Right ventricle myocardium inferior (tissue), 1 donor: ENCODE measurements at regions of chr17 and their contacts with region 1.

Region 1: DNA sequence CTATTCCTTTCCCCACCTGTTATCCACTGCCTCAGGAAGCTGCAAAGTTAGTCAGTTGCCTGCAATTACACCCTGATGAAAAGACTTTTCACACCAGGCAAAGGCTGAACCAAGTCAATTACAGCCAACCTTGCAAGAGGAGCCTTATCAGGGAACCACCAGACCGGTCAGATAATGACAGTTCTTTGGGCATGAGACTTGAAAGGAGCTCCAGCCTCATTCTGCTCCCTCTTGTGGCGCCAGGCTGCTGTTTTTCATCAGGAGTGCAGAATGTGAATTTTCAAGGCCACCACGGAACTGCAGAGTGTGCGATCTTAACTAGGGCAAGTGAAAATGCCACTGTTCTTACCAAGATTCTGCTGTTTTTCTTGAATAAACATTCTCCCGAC is 22.5 kb downstream of the DNAI2 start:
- DNase-seq: peak; percentile 64
- ATAC-seq: peak; percentile 86

Region 2: DNA sequence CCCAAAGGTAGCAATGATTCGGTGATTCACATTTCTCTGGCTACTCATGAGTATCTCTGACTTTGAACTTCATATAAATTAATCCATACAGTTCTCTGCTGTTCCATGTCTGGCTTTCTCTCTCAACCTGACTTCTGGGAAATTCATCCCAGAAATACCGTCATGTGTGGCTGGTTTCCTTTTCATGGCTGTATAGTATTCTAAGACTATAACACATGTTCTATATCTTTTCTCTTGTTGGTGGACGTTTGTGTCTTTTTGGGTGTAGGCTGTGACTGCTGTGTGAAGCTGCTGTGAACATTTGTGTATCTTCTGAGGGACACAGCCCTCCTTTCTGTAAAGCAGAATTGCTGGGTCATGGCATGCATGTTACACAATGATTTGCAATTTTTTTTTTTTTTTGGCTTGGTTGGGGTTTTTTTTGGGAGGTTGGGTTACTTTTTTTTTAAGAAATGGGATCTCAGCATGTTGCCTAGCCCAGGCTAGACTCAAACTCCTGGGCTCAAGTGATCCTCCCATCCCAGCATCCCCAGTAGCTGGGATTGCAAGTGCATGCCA is 76.9 kb before region 1 on chr17:
- intact Hi-C with region 1: no loop called
- DNase-seq: no peak
- ATAC-seq: no peak

Region 3: GRCh38 chr17:74243013-74243755 is 53.4 kb before region 1 on chr17:
- intact Hi-C with region 1: loop called (anchors 1 kb)
- DNase-seq: no peak
- ATAC-seq: peak; percentile 87

Region 4: GRCh38 chr17:74271281-74271680 is 25.3 kb before region 1 on chr17:
- intact Hi-C with region 1: no loop called
- DNase-seq: no peak
- ATAC-seq: no peak

Region 5: DNA sequence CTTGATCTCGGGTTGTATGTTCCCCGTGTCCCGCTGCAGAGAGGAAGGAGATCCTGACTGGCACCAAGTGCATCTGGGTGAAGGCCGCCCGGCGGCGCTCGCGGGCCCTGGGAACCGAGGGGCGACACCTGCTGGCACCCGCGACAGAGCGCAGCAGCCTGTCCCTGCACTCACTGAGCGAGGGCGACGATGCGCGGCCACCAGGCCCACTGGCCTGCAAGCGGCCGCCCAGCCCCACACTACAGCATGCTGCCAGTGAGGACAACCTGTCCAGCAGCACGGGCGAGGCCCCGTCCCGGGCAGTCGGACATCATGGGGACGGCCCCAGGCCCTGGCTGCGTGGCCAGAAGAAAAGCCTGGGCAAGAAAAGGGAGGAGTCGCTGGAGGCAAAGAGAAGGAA is 57.6 kb after region 1 on chr17:
- intact Hi-C with region 1: loop called (anchors 2 kb)
- DNase-seq: no peak
- ATAC-seq: peak; percentile 63

Region 6: DNA sequence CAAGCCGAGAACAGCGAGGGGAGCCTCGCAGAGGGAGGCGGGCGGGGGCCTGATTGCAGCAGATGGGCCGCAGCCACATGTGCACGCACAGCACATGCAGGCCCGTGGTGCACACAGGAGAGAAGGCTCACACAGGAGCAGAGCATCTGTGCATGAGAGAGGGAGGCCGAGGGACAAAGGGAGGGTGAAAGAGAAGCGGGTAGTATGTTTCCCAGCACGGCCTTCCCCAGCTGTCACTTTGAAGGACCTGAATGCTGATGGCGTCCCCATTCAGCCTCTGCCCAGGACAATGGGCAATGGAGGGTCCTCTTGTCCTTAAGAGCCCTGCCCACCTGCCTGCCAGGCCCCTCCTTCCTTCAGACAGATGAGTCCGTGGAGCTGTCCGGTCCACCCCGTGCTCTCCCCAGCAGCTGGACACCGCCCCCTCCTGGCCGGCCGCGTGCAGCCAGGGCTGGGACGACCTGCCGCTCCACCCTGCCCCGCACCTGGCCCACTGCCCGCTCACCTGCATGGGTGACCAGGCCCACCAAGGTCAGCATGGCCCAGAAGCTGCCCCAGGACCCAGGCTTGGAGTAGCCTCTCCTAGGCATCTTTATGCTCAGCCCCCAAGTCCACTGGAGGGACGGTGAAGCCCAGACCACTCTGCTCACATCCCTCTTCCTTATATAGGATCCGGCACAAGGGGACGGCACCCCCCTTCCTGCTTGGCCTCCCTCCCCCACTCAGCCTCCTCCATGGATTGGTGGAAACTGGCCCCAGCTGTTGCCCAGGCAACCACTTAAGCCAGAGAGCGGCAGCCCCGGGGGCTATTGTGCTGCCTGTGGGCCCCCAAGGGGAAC is 64.9 kb after region 1 on chr17 and contains the start of gene BTBD17:
- intact Hi-C with region 1: loop called (anchors 2 kb)
- DNase-seq: peak; percentile 75
- ATAC-seq: peak; percentile 79
- total RNA-seq, gene BTBD17: not detected

Region 7: DNA sequence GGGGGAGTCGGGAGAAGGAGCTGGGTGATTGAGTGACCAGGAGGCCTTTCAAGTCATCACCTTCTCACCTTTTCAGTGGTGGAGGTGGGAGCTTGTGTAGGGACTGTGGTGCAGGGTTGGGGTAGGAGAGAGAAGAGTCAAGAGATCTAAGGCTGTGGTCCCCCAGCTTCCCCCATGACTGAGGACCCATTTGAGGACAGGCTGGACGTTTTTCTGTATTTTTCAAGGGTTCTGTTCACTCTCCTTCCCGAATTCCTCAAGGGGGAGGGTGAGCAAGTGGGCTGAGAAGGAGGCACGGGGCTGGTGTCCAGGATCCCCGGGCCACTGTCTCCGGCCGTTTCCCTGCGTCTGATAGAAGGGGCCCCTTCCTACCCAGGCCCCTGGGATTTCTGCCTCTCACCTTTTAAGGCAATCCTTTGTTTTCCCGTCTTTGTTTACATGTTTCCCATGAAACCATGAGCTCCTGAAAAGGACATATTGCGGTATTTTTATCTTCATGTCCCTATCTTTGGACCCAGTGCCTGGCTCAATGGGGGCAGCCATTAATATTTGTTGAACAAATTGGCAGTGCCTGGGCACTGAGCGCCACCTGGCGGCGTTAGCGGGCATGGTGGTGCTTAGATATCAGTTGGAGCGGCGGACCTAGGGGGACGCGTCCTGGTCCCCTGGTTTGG is 160.7 kb after region 1 on chr17:
- intact Hi-C with region 1: loop called (anchors 5 kb)
- DNase-seq: peak; percentile 93
- ATAC-seq: no peak

Region 8: DNA sequence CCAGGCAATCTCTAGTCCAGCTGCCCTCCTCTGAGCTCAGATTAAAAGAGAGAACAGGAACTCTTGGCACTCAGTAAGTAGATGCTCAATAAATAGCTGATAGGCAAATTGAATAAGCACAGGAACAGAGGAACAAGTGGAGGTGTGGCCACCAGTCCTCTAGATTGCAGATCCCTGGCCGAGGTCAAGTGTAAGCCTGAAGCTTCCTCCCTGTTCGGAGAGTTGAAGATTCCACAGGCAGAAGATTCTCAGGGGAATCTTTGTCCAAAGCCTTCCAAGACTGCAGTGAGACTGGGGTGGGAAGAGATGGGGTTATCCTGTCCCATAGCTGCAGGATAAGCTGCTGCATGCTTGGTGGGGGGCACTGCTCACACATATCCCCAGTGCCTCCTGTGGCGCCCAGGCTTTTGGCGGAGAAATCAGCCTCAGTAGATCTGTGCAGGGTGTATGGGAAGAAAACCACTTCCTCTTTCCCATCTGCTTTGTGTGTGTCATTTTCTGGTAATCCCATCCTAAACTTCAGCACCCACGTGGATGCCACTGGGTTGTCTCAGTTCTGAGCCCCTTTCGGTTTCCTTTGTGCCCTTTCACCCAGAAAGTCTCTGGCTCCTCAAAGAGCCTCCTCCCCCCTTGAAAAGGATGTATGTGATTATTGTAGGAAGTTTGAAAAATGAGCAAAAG is 182.0 kb after region 1 on chr17:
- intact Hi-C with region 1: no loop called
- DNase-seq: no peak
- ATAC-seq: peak; percentile 65